HEK293 (cell line): ENCODE measurements at regions of chr15 and their contacts with region 1.

Region 1: DNA sequence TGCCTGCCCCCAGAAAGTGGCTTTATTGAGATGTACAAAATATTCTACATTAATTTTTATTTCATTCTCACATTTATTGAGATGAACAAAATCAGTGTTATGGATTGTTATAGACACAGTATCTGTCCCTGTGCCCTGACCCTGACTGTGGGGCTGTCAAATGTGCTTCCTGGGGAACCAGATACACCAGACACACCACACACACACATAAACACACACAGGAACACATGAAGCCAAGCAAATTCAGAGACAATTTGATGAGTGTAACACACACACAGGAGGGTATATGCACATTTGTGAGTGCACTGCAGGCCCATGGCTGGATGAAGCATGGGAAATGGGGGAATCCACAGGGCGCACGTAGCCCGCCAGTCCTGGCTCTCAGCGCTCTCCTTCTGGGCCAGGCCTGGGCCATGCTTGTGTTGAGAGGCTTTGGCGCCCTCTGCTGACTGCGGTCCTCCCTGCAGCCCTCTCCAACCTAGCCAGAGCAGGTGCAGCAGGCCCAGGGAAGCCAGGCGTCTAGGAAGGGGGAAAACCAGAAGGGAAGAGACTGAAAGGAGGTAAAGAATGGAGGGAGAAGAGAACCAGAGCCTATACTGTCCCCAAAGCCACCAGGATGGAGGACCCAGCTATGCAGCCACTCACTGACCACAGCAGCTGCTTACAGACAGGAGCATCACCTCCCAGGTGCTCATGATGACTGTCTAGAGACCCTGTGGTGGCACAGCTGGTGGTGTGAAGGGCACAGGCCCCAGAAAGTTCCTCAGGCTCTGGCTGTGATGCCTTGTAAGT is 18.0 kb upstream of the LOXL1 start:
- H3K4me3 ChIP-seq: no peak overlapping the region
- H3K27ac ChIP-seq: no peak overlapping the region
- H3K4me1 ChIP-seq: no peaks in the 10 kb centered on the region
- CTCF ChIP-seq: peak; percentile 93

Region 2: DNA sequence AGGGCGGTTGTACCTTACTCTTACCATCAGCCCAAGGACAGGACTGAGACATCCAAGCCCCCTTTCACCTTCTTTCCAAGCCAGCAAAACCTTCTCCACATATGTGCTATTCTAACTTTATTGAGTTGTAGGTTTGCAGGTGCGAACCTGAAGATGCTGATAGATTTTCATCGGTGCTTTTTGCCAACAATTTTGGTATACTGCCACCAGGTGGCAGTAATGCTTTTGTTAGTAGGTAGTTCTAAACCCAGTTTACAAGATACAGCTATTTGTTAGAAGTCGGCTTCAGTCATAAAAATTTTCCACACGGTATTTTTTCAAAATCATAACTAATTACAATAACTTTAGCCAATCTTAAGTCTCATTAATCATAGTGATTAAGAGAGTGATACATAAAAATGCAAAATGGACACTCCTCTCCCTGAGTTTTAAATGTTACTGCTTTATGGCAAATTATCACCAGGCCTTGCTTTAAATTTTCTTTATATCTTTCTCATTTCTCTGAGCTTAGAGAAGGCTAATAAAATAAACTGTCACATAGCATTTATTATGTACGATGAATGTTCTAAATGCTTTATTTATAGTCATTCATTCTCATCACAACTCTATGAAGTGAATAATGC is 34.2 kb before region 1 on chr15:
- CTCF ChIA-PET with region 1: interaction called, 31 read pairs
- POLR2A ChIA-PET with region 1: interaction called, 3 read pairs
- H3K4me3 ChIP-seq: no peak overlapping the region
- H3K27ac ChIP-seq: no peak overlapping the region
- H3K4me1 ChIP-seq: peaks cover 5% of the 10 kb centered on the region; the same call in 1 of the 2 replicates
- CTCF ChIP-seq: 0 out of 2 replicates have a peak, but pooled peaks have one; percentile 13

Region 3: DNA sequence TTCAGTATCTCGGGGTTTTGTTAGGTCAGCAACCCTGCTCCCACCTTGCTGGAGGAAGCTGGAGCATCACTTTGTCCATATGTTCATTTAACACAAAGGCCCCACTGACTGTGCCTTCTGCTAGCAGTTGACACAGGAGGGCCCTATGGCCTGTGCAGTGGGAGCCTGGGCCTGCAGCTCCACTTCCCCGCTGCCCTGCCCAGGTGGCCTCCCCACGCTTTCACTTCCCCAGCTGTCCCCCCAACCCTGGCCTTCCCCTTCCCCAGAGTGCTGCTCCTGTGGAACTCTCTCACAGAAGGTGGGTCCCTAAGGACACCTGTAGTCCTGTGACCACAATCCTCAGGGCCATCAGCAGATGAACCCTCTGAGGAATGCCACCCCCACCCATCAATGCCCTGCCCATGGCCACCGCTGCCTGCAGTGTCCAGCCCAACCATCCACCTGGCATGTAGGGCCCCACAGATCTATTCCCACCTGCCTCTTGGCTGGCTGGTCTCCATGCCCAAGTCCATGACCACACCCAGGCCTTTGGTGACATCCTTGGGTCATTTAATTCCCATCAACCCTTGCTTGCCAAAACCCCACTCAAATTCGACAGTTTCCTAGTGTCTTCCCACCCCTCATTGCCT is 21.4 kb before region 1 on chr15:
- CTCF ChIA-PET with region 1: interaction called, 18 read pairs
- POLR2A ChIA-PET with region 1: no interaction called
- H3K4me3 ChIP-seq: no peak overlapping the region
- H3K27ac ChIP-seq: no peak overlapping the region
- H3K4me1 ChIP-seq: no peaks in the 10 kb centered on the region
- CTCF ChIP-seq: no peak

Region 4: DNA sequence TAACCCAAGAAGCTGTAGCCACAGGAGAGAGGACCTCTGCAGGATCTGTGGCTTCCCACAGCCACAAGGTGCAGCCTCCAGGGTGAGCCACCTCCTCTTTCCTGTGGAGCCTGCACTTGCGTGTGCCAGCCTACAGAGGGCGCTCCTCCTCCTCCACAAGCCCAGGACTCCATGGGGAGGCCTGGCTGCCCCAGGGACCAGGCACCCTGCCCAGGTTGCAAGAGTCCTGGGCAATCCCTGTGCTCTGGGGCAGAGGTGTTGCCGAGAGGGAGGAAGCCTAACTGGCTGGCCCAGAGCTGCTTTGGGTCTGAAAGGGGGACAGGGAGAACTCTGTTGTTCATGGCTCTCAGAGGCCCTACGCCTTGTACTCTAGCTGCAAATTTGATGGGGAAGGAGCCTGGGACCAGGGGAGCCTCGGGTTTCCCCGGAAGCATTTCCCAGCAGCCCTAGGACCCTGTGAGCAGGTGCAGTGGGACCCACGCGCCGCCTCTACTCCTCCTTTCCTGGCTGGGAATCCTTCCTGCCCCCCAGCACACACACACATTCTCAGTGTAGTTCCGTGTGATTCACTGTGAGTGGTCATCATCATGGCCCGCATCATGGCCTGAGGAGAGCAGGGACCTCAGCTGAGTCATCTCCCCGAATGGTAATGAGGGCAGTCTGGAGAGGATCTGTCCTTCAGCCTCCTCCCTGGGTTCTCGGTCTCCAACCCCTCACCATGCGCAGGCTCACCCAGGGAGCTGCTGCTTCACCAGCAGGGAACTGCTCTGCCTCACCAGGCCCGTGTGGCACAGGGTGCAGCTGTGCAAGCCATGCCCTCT is 10.6 kb before region 1 on chr15:
- CTCF ChIA-PET with region 1: interaction called, 88 read pairs
- POLR2A ChIA-PET with region 1: no interaction called
- H3K4me3 ChIP-seq: no peak overlapping the region
- H3K27ac ChIP-seq: no peak overlapping the region
- H3K4me1 ChIP-seq: no peaks in the 10 kb centered on the region
- CTCF ChIP-seq: peak; percentile 96

Region 5: DNA sequence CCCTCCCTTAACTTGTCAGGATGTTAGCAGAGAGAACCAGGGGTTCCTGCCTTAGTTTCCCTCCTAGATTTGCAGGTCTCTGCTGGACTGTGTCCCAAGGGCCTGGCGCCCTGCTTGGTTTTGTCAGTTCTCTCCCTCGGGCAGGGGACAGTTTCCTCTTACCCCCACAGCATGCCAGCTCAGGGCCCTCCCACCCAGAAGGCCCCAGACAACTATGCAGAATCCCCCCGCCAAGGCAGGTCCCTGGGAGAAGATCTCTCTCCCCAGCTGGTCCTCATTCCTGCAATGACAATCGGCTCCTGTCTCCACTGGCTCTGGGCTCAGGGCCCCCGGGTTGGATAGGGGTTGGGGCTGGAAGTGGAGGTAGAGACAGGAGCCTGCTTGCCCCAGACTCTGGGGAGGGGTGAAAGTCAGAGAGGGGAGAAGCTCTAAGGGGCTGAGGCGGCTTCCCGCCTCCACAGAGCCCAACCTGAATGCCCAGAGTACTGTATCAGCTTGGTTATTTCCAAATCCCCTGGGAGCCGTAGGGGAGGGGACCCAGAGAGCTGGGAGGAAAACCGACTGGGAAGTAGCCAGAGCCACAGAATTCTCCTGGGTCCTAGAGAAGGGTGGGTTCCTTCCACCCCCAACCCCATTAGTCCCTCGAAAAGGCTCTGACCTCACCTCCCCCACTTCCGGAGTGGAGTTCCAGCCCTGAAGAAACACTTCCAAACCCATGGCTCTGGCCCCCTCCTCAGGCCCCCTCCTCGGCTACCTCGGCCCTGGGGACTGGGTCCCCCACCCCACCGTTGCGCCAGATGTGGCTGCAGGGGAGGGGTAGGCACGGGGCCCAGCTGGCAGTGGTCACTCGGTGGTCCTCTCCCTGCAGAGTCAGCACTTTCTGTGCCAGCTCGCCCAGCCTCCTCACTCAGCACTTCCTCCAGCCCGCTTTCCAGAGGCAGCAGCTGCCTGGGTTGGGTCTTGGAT is 14.2 kb after region 1 on chr15:
- CTCF ChIA-PET with region 1: interaction called, 23 read pairs
- POLR2A ChIA-PET with region 1: no interaction called
- H3K4me3 ChIP-seq: no peak overlapping the region
- H3K27ac ChIP-seq: no peak overlapping the region
- H3K4me1 ChIP-seq: peaks cover 26% of the 10 kb centered on the region
- CTCF ChIP-seq: no peak

Region 6: GRCh38 chr15:73936181-73936580 is 28.0 kb after region 1 on chr15:
- CTCF ChIA-PET with region 1: interaction called, 13 read pairs
- POLR2A ChIA-PET with region 1: no interaction called
- H3K4me3 ChIP-seq: no peak overlapping the region
- H3K27ac ChIP-seq: no peak overlapping the region
- H3K4me1 ChIP-seq: peaks cover 3% of the 10 kb centered on the region; the same call in 1 of the 2 replicates
- CTCF ChIP-seq: 0 out of 2 replicates have a peak, but pooled peaks have one; percentile 15

Region 7: DNA sequence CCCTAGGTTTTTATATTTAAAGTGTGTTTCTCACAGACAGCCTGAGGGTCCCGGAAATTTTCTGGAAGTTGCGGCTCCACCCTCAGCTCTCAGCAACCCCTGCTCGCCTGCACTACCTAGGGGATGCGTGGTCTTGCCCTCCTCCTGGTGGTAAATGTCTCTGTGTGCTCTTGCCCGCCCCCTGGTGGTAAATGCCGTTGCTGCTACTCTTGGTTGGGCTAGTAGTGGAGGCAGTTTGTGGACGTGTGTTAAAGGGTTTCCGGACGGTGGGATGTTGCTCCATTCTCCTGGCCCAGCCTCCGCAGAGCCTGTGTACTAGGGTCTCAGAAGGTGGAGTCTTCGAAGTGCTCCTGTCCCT is 56.5 kb after region 1 on chr15:
- CTCF ChIA-PET with region 1: interaction called, 15 read pairs
- POLR2A ChIA-PET with region 1: no interaction called
- H3K4me3 ChIP-seq: no peak overlapping the region
- H3K27ac ChIP-seq: no peak overlapping the region
- H3K4me1 ChIP-seq: peaks cover 3% of the 10 kb centered on the region; the same call in 1 of the 2 replicates
- CTCF ChIP-seq: peak; percentile 98